ENCODE measurements at regions of chr1 and their contacts with region 1.

Region 1: DNA sequence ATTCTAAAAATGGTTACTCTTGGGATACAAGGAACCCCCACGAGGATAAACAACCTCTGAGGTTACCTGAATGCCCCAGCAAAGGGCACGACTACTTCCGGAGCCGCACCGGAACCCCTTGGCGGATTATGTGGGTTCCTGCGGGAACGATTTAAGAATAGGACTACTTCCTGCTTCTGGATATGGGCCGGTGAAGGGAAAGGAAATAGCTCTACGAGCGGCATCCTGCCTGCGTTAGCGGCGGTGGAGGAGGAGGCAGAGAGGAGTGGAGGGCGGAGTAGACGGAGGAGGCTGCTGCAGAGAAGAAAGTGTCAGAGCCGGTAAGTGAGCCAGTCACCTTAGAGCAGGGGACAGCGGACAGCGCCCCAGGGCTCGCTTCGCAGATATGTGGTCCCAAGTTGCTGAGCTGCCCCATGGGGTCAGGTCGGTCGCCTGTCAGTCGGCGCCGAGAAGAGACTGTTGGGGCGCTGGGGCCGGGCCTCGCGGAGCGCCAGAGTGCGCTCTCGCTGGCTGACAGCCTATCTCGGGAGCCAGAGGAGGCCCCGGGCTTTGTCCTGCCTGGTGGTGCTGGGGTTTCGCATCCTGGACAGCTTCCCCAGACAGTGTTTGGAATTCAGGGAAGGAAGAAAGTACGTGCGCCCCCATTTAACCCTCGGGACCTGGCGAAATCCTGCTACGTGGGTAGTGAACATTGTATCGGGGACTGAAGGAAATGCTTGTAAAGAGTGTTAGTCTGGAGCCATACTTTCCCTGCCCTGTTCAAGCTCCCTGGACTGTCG is at the start of gene KLHL20:
- DNase-seq: peak; percentile 82
- ATAC-seq: peak; percentile 99
- H3K4me3 Mint-ChIP-seq: peak within 1 kb of the TSS; percentile 97
- H3K27ac Mint-ChIP-seq: peak within 1 kb of the TSS; percentile 98
- H3K4me1 Mint-ChIP-seq: peaks cover 16% of the 10 kb centered on the region
- H3K27me3 Mint-ChIP-seq: peaks cover 15% of the 10 kb centered on the region
- total RNA-seq, gene KLHL20: 27.7 to 28.0 TPM

Region 2: DNA sequence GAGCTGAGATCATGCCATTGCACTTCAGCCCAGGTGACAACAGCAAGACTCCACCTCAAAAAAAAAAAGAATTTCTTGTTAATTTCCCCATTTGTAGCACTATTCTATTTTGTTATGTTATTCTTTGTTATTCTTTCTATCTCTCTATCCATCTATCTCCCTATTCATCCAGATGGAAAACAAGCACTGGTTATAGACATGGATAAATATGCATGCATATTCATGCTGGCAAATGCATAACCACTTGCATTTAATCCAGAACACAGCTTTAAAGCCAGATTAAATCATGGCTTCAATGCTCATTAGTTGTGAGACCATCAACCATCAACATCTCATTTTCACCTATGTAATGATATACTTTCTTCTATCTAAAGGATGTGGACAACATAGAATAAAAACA is 21.7 kb before region 1 on chr1:
- POLR2A ChIA-PET with region 1: no interaction called
- DNase-seq: no peak
- ATAC-seq: no peak
- H3K4me3 Mint-ChIP-seq: no peak overlapping the region
- H3K27ac Mint-ChIP-seq: no peak overlapping the region
- H3K4me1 Mint-ChIP-seq: peaks cover 6% of the 10 kb centered on the region
- H3K27me3 Mint-ChIP-seq: peaks cover 9% of the 10 kb centered on the region

Region 3: DNA sequence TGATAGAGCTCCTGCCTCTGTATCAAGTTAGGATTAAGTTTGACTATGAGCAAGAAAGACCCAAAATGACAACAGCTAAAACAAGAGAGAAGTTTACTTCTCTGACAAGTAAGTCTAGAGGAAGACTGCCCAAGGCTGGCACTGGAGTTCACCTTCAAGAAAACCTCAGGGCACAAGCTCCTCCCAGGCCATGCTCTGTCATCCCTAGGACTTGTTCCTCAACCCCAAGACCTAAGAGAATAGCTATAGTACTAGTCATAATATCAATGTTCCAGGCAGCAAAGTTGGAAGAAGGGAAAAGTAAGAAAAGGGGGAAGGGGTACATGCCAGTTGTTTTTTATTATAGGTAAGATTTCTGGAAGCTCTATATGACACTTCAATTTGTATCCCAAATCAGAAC is 83.1 kb after region 1 on chr1:
- POLR2A ChIA-PET with region 1: no interaction called
- DNase-seq: no peak
- ATAC-seq: no peak
- H3K4me3 Mint-ChIP-seq: no peak overlapping the region
- H3K27ac Mint-ChIP-seq: no peak overlapping the region
- H3K4me1 Mint-ChIP-seq: no peaks in the 10 kb centered on the region
- H3K27me3 Mint-ChIP-seq: no peaks in the 10 kb centered on the region

Region 4: GRCh38 chr1:173824331-173825081 is 109.6 kb after region 1 on chr1 and contains the starts of genes CENPL and DARS2:
- POLR2A ChIA-PET with region 1: interaction called, 23 read pairs
- DNase-seq: peak; percentile 84
- ATAC-seq: peak; percentile 88
- H3K4me3 Mint-ChIP-seq: peak within 1 kb of the TSS; percentile 92
- H3K27ac Mint-ChIP-seq: peak within 1 kb of the TSS; percentile 95
- H3K4me1 Mint-ChIP-seq: peaks cover 39% of the 10 kb centered on the region
- H3K27me3 Mint-ChIP-seq: no peaks in the 10 kb centered on the region
- total RNA-seq, gene CENPL: 33.9 to 34.0 TPM
- total RNA-seq, gene DARS2: 21.6 to 22.5 TPM

Region 5: DNA sequence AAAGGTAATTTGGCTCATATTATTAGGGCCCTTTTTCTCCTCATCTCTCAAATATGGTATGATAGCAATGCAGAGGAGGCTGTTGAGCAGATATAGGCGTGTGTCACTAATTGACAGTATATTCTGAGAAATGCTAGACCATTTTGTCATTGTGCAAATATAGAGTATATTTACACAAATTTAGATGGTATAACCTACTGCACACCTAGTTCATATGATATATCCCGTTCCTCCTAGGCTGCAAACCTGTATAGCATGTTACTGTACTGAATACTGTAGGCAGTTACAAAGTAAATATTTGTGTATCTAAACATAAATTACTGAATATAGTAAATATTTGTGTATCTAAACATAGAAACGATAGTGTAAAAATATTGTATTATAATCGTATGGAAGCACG is 161.8 kb after region 1 on chr1:
- POLR2A ChIA-PET with region 1: no interaction called
- DNase-seq: no peak
- ATAC-seq: no peak
- H3K4me3 Mint-ChIP-seq: no peak overlapping the region
- H3K27ac Mint-ChIP-seq: no peak overlapping the region
- H3K4me1 Mint-ChIP-seq: peaks cover 8% of the 10 kb centered on the region
- H3K27me3 Mint-ChIP-seq: no peaks in the 10 kb centered on the region

Measured in activated naive CD8-positive, alpha-beta T cell treated with anti-CD3 and anti-CD28 coated beads, Interleukin-2, amount 10 ng/mL, durations not matched to agents 7 days and 5 days (primary cell).